Cardiac septum (tissue), 1 donor: ENCODE measurements at regions of chr1 and their contacts with region 1.

Region 1: DNA sequence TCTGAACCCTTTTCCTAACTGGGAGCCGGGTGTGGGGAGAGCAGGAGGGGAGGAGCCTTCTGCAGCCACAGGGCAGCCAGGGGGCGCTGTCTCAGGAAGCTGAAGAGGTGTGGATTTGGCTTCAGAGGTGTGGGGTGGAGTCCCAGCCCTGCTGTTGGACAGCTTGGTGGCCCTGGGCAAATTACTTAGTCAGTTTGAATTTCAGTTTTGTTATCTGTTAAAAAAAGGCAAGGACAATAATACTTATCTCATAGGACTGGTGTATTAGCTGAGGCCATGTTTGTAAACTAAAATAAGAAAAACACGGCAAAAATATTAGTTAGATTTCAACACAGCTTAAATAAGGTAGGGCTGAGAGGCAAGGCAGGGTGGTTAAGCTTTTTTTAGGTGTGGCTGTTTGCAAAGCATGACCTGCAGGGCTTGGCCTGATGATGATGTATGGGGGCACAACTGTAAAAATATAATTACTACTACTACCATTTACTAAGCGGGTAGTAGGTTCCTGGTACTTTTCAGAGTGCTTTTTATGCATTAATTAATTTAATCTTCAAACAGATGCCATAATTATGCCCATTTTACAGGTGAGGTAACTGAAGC is 111.8 kb downstream of the PLXNA2 start:
- DNase-seq: peak; percentile 87

Region 2: GRCh38 chr1:208036109-208036808 is 96.1 kb before region 1 on chr1:
- intact Hi-C with region 1: no loop called
- DNase-seq: no peak

Region 3: GRCh38 chr1:208177656-208178055 is 45.3 kb after region 1 on chr1:
- intact Hi-C with region 1: loop called (anchors 5 kb)
- DNase-seq: no peak

Region 4: GRCh38 chr1:208652296-208653160 is 520.1 kb after region 1 on chr1:
- intact Hi-C with region 1: no loop called
- DNase-seq: no peak